PC-9 (cell line): ENCODE measurements at regions of chr9 and their contacts with region 1.

Region 1: GRCh38 chr9:82912645-82913044 is 150.3 kb downstream of the RASEF start:
- DNase-seq: no peak
- H3K4me3 ChIP-seq: no peak overlapping the region
- H3K27ac ChIP-seq: no peak overlapping the region
- H3K4me1 ChIP-seq: no peaks in the 10 kb centered on the region
- H3K27me3 ChIP-seq: no peaks in the 10 kb centered on the region
- CTCF ChIP-seq: peak; percentile 61

Region 2: GRCh38 chr9:82524407-82524806 is 388.2 kb before region 1 on chr9:
- CTCF ChIA-PET with region 1: no interaction called
- POLR2A ChIA-PET with region 1: interaction called, 13 read pairs
- intact Hi-C with region 1: no loop called
- DNase-seq: no peak
- H3K4me3 ChIP-seq: no peak overlapping the region
- H3K27ac ChIP-seq: no peak overlapping the region
- H3K4me1 ChIP-seq: no peaks in the 10 kb centered on the region
- H3K27me3 ChIP-seq: no peaks in the 10 kb centered on the region
- CTCF ChIP-seq: no peak

Region 3: GRCh38 chr9:82532504-82533180 is 380.0 kb before region 1 on chr9:
- CTCF ChIA-PET with region 1: no interaction called
- POLR2A ChIA-PET with region 1: no interaction called
- intact Hi-C with region 1: loop called (anchors 5 kb)
- DNase-seq: no peak
- H3K4me3 ChIP-seq: no peak overlapping the region
- H3K27ac ChIP-seq: no peak overlapping the region
- H3K4me1 ChIP-seq: no peaks in the 10 kb centered on the region
- H3K27me3 ChIP-seq: no peaks in the 10 kb centered on the region
- CTCF ChIP-seq: peak; percentile 40; the same call in 1 of the 2 replicates

Region 4: GRCh38 chr9:83012922-83013838 is 100.5 kb after region 1 on chr9:
- CTCF ChIA-PET with region 1: no interaction called
- POLR2A ChIA-PET with region 1: no interaction called
- intact Hi-C with region 1: no loop called
- DNase-seq: no peak
- H3K4me3 ChIP-seq: no peak overlapping the region
- H3K27ac ChIP-seq: no peak overlapping the region
- H3K4me1 ChIP-seq: no peaks in the 10 kb centered on the region
- H3K27me3 ChIP-seq: no peaks in the 10 kb centered on the region
- CTCF ChIP-seq: no peak